SK-N-SH (cell line): ENCODE measurements at regions of chr11 and their contacts with region 1.

Region 1: GRCh38 chr11:13834463-13834862 is 128.1 kb upstream of the SPON1 start:
- DNase-seq: peak; percentile 37
- H3K4me3 ChIP-seq: no peak overlapping the region; a peak in 1 of 4 replicates
- H3K27ac ChIP-seq: no peak overlapping the region
- H3K4me1 ChIP-seq: no peaks in the 10 kb centered on the region; a peak in 1 of 4 replicates
- H3K27me3 ChIP-seq: no peaks in the 10 kb centered on the region
- CTCF ChIP-seq: peak; percentile 42
- EP300 ChIP-seq: no peak
- RAD21 ChIP-seq: peak; percentile 16; the same call in 1 of the 2 replicates

Region 2: GRCh38 chr11:13848031-13848430 is 13.6 kb after region 1 on chr11:
- CTCF ChIA-PET with region 1: interaction called, 13 read pairs
- POLR2A ChIA-PET with region 1: no interaction called
- DNase-seq: no peak
- H3K4me3 ChIP-seq: no peak overlapping the region
- H3K27ac ChIP-seq: no peak overlapping the region
- H3K4me1 ChIP-seq: peaks cover 0 to 7% of the 10 kb centered on the region in 2 experiments; a peak in 2 of 4 replicates
- H3K27me3 ChIP-seq: no peaks in the 10 kb centered on the region
- CTCF ChIP-seq: no peak
- EP300 ChIP-seq: no peak
- RAD21 ChIP-seq: no peak